Transverse colon (tissue), 4 donors: ENCODE measurements at regions of chr15 and their contacts with region 1.

Region 1: GRCh38 chr15:95734422-95735316 is 595.8 kb upstream of the NR2F2 start:
- DNase-seq: no peak
- H3K4me3 ChIP-seq: no peak overlapping the region
- H3K27ac ChIP-seq: no peak overlapping the region
- H3K4me1 ChIP-seq: no peaks in the 10 kb centered on the region
- H3K27me3 ChIP-seq: no peaks in the 10 kb centered on the region
- CTCF ChIP-seq: no peak
- EP300 ChIP-seq: no peak
- POLR2A ChIP-seq: no peak

Region 2: GRCh38 chr15:94008104-94009074 is 1726.3 kb before region 1 on chr15:
- in situ Hi-C with region 1: no loop called
- intact Hi-C with region 1: no loop called
- DNase-seq: no peak
- H3K4me3 ChIP-seq: no peak overlapping the region
- H3K27ac ChIP-seq: no peak overlapping the region
- H3K4me1 ChIP-seq: no peaks in the 10 kb centered on the region
- H3K27me3 ChIP-seq: no peaks in the 10 kb centered on the region
- CTCF ChIP-seq: no peak
- EP300 ChIP-seq: no peak
- POLR2A ChIP-seq: no peak

Region 3: GRCh38 chr15:95468820-95469219 is 265.8 kb before region 1 on chr15:
- in situ Hi-C with region 1: no loop called
- intact Hi-C with region 1: loop called (anchors 5 kb)
- DNase-seq: no peak
- H3K4me3 ChIP-seq: no peak overlapping the region
- H3K27ac ChIP-seq: no peak overlapping the region
- H3K4me1 ChIP-seq: no peaks in the 10 kb centered on the region
- H3K27me3 ChIP-seq: no peaks in the 10 kb centered on the region
- CTCF ChIP-seq: no peak
- EP300 ChIP-seq: no peak
- POLR2A ChIP-seq: no peak

Region 4: DNA sequence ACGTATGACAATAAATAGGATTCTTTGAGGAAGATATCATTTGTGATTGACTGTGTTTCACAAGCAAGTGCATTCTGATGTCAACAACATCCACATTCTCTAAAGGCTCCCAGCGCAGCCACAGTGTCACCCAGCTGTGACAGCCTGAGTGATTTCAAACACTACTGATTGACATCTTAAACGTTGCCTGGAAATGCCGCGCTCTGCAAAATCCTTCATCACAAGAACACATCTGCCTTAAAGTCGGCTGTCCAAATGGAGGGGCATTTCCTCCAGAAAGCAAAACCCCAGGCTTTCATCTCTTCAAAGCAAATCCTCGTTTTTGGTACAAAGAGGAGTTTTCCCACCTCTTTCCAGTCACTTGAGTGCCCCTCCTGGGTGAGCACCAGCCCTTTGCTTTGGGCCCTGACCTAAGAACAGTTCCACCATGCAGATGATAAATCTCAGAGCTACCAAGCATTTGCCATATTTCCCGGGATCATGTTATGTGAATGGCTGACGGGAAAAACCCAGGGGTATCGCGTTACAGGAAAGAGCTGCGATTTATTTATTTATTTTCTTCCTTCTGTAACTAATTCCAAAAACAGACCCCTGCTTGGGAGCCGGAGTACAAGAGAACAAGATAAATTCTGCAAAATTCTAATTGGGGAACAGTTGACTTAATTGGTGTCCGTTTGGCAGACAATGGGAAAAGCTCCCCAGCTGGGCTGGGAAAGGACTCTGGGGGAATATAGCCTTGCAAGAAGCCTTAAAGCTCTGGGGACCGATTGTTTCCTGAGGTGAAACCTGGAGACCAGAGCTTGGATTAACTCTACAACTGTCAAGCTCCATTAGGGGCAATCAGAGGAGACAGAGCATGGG is 107.9 kb before region 1 on chr15:
- in situ Hi-C with region 1: loop called in 1 of 4 experiments (anchors 25 kb)
- intact Hi-C with region 1: no loop called
- DNase-seq: no peak
- H3K4me3 ChIP-seq: no peak overlapping the region
- H3K27ac ChIP-seq: no peak overlapping the region
- H3K4me1 ChIP-seq: no peaks in the 10 kb centered on the region
- H3K27me3 ChIP-seq: no peaks in the 10 kb centered on the region
- CTCF ChIP-seq: no peak
- EP300 ChIP-seq: no peak
- POLR2A ChIP-seq: no peak

Region 5: DNA sequence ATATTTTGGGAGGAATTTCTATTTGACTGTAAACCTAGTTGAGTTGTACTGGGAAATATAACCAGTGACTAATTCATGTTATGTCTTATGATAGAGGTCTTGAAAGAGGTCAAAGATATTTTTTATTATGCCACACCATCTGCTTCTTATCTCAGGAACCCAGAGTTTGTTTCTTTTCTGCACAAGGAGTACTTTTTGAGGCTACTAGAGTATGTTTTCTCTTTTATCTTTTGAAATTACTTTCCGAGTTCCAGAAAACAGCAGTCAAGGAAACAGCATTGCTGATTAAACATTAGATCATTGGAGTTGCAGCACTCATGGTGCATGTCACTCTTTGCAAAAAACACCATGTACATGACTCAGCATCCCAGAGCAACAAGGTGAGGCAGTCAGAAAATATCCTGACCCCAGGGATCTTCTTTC is 50.0 kb before region 1 on chr15:
- in situ Hi-C with region 1: no loop called
- intact Hi-C with region 1: no loop called
- DNase-seq: no peak
- H3K4me3 ChIP-seq: no peak overlapping the region
- H3K27ac ChIP-seq: no peak overlapping the region
- H3K4me1 ChIP-seq: no peaks in the 10 kb centered on the region
- H3K27me3 ChIP-seq: no peaks in the 10 kb centered on the region
- CTCF ChIP-seq: no peak
- EP300 ChIP-seq: no peak
- POLR2A ChIP-seq: no peak